ENCODE measurements at regions of chr7 and their contacts with region 1.

Region 1: GRCh38 chr7:141014524-141015395 is at the start of gene MRPS33:
- DNase-seq: peak; percentile 94
- H3K4me3 Mint-ChIP-seq: peak within 1 kb of the TSS; percentile 92
- H3K27ac Mint-ChIP-seq: peak within 1 kb of the TSS; percentile 98
- H3K4me1 Mint-ChIP-seq: peaks cover 40% of the 10 kb centered on the region
- H3K27me3 Mint-ChIP-seq: peaks cover 14% of the 10 kb centered on the region
- total RNA-seq, gene MRPS33: 63.0 and 73.9 TPM in 2 replicates

Region 2: GRCh38 chr7:139359366-139360209 is 1655.2 kb before region 1 on chr7 and contains the start of gene LUC7L2:
- intact Hi-C with region 1: loop called (anchors 10 kb)
- DNase-seq: peak; percentile 99
- H3K4me3 Mint-ChIP-seq: peak within 1 kb of the TSS; percentile 88
- H3K27ac Mint-ChIP-seq: peak within 1 kb of the TSS; percentile 97
- H3K4me1 Mint-ChIP-seq: peaks cover 29% of the 10 kb centered on the region
- H3K27me3 Mint-ChIP-seq: no peaks in the 10 kb centered on the region
- total RNA-seq, gene LUC7L2: 179 and 194 TPM in 2 replicates

Region 3: GRCh38 chr7:140517546-140518369 is 497.0 kb before region 1 on chr7:
- intact Hi-C with region 1: loop called (anchors 1 kb)
- DNase-seq: peak; percentile 38
- H3K4me3 Mint-ChIP-seq: no peak overlapping the region
- H3K27ac Mint-ChIP-seq: no peak overlapping the region
- H3K4me1 Mint-ChIP-seq: no peaks in the 10 kb centered on the region
- H3K27me3 Mint-ChIP-seq: peaks cover 11% of the 10 kb centered on the region

Region 4: GRCh38 chr7:140726281-140726680 is 288.5 kb before region 1 on chr7:
- intact Hi-C with region 1: loop called (anchors 5 kb)
- DNase-seq: no peak
- H3K4me3 Mint-ChIP-seq: no peak overlapping the region
- H3K27ac Mint-ChIP-seq: no peak overlapping the region
- H3K4me1 Mint-ChIP-seq: peaks cover 16% of the 10 kb centered on the region
- H3K27me3 Mint-ChIP-seq: no peaks in the 10 kb centered on the region

Region 5: GRCh38 chr7:141053626-141054025 is 38.9 kb after region 1 on chr7:
- intact Hi-C with region 1: loop called (anchors 2 kb)
- DNase-seq: peak; percentile 71
- H3K4me3 Mint-ChIP-seq: peak overlapping the region; percentile 66
- H3K27ac Mint-ChIP-seq: peak overlapping the region; percentile 97
- H3K4me1 Mint-ChIP-seq: peaks cover 19% of the 10 kb centered on the region
- H3K27me3 Mint-ChIP-seq: peaks cover 11% of the 10 kb centered on the region

Region 6: DNA sequence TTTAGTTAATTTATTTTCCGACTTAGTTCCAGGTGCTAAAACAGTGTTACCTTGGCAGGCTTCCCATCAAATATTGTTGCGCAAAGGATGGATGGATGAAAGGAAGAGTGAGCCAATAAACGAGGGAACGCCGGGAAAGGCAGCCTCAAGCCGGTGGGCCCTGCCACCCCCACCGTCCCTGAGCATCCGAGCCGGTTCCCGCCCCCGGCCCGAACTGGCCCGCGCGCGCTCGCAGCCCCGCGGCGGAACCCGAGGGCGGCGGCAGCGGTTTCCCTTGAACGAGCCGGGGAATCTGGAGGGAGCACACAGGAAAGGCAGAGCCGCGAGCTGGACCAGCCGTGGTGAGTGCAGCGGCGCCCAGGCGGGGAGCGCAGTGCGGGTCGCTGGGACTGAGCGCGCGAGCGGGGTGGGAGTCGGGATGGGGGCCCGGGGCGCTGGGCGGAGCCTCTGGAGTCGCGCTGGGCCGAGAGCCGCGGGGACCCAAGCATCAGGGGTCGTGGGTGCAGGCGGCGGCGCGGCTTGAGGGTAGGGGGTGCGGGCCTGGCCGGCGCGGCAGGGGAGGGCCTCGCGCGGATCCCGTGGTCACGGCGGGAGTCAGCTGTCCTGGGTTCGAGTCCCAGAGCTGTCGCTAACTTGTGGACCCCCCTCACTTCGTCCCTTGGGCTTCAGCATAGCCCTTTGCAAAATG is 536.5 kb after region 1 on chr7 and contains the start of gene AGK:
- intact Hi-C with region 1: loop called (anchors 1 kb)
- DNase-seq: peak; percentile 79
- H3K4me3 Mint-ChIP-seq: peak within 1 kb of the TSS; percentile 91
- H3K27ac Mint-ChIP-seq: peak within 1 kb of the TSS; percentile 97
- H3K4me1 Mint-ChIP-seq: peaks cover 50% of the 10 kb centered on the region
- H3K27me3 Mint-ChIP-seq: no peaks in the 10 kb centered on the region
- total RNA-seq, gene AGK: 174 and 179 TPM in 2 replicates

Region 7: DNA sequence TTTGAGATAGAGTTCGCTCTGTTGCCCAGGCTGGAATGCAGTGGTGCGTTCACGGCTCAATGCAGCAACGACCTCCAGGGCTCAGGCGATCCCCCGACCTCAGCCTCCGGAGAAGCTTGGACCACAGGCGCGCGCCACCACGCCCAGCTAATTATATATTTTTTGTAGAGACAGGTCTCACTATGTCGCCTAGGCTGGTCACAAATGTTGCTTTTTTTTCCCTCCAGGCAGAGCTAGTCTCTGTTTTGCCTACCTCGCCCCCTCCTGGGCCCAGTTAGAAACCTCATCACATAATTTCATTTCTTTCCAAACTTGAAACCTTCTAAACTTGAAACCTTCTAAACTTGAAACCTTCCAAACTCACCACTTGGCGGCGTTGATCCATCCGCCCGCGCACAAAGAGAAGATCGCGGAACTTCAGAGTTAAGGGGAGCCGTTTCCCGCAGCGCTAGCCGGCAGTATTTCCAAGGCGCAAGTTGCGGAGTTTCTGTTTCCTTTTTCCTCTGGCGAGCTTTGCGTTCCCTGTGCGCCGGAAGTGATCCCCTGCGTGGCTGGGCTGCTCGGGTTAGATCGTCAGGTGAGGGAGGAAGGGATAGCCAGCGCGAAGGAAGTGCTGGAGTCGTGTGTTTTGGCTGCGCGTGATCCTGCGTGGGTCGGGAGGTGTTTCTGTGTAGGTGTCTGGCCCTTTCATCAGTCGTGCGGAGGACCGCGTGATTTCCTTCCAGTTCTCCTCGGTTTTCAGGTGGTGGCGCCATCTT is 723.3 kb after region 1 on chr7 and contains the start of gene SSBP1:
- intact Hi-C with region 1: loop called (anchors 1 kb)
- DNase-seq: peak; percentile 91
- H3K4me3 Mint-ChIP-seq: peak within 1 kb of the TSS; percentile 94
- H3K27ac Mint-ChIP-seq: peak within 1 kb of the TSS; percentile 96
- H3K4me1 Mint-ChIP-seq: peaks cover 24% of the 10 kb centered on the region
- H3K27me3 Mint-ChIP-seq: no peaks in the 10 kb centered on the region
- total RNA-seq, gene SSBP1: 240 and 245 TPM in 2 replicates

Measured in activated T-helper 1 cell treated with anti-CD3 and anti-CD28 coated beads, Interleukin-12 subunit alpha, Interleukin-12 subunit beta, Interleukin-2, Interleukin-4 antibody, amounts not matched to agents 30 ng/mL and 10 ng/mL and 1 ng/mL, durations not matched to agents 14 hours and 24 hours and 36 hours (primary cell).